Upper lobe of right lung (tissue), 1 donor: ENCODE measurements at regions of chr18 and their contacts with region 1.

Region 1: DNA sequence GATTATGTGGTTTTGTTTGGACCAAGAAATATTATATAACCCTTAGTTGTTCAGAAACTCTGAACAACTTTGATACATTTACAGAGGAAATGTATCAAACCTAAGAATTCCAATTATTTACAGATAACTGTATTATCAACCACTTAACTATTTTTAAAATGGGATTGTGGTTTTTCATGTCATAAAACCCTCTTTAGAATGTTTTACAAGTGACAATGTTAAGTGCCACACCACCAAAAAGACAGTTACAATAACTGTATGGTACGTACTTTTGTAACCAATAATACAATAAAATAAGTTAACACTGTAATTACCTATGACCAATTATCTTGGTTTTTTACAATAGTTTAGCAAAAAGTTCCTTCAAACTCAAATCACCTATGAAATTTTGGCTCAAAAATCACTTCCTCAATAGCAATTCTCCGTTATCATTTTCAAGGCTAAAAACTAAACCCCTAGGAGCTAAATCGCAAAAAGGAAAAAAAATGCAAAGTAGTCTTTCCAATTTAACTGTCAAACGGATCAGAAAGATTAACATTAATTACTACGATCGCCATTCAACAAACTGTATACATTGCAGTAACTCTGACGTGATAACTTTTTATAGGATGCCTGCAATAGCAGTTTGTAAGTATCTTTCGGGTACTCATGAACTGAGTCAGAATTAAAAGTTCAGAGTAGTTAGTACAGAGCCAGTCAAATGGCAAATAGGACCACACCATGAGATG is 1.5 kb downstream of the ROCK1 start:
- DNase-seq: no peak
- ATAC-seq: no peak
- H3K4me3 ChIP-seq: peak overlapping the region; percentile 96
- H3K27ac ChIP-seq: peak overlapping the region; percentile 96
- H3K4me1 ChIP-seq: peaks cover 37% of the 10 kb centered on the region
- H3K27me3 ChIP-seq: no peaks in the 10 kb centered on the region
- CTCF ChIP-seq: no peak

Region 2: GRCh38 chr18:20996418-20996817 is 113.7 kb before region 1 on chr18:
- intact Hi-C with region 1: loop called (anchors 10 kb)
- DNase-seq: no peak
- ATAC-seq: no peak
- H3K4me3 ChIP-seq: no peak overlapping the region
- H3K27ac ChIP-seq: no peak overlapping the region
- H3K4me1 ChIP-seq: no peaks in the 10 kb centered on the region
- H3K27me3 ChIP-seq: no peaks in the 10 kb centered on the region
- CTCF ChIP-seq: no peak

Region 3: DNA sequence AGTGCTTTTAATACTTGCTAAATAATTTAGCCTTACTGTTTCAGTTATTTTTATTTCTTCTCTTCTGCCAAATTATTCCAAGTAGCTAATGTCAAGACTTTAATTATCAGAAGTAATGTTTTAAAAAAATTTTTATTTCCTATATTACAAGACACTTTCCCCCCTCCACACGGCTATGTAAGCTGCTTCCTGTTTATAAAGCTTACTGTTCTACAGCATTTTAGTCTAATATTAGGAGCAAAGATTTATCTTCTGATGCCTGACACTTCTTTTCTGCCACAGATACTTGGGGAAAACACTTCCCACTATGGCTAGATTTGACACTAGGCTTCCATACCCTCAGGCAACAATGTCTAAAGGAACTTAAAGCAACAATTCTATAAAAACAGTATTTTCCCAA is 60.8 kb before region 1 on chr18:
- intact Hi-C with region 1: no loop called
- DNase-seq: no peak
- ATAC-seq: no peak
- H3K4me3 ChIP-seq: no peak overlapping the region
- H3K27ac ChIP-seq: peak overlapping the region; percentile 44
- H3K4me1 ChIP-seq: peaks cover 34% of the 10 kb centered on the region
- H3K27me3 ChIP-seq: no peaks in the 10 kb centered on the region
- CTCF ChIP-seq: no peak